Upper lobe of right lung (tissue), 1 donor: ENCODE measurements at regions of chr18 and their contacts with region 1.

Region 1: GRCh38 chr18:32158108-32158624 is 31.7 kb upstream of the MEP1B start:
- DNase-seq: peak; percentile 75
- ATAC-seq: peak; percentile 99
- H3K4me3 ChIP-seq: peak overlapping the region; percentile 39
- H3K27ac ChIP-seq: no peak overlapping the region
- H3K4me1 ChIP-seq: peaks cover 3% of the 10 kb centered on the region
- H3K27me3 ChIP-seq: no peaks in the 10 kb centered on the region
- CTCF ChIP-seq: peak; percentile 83

Region 2: DNA sequence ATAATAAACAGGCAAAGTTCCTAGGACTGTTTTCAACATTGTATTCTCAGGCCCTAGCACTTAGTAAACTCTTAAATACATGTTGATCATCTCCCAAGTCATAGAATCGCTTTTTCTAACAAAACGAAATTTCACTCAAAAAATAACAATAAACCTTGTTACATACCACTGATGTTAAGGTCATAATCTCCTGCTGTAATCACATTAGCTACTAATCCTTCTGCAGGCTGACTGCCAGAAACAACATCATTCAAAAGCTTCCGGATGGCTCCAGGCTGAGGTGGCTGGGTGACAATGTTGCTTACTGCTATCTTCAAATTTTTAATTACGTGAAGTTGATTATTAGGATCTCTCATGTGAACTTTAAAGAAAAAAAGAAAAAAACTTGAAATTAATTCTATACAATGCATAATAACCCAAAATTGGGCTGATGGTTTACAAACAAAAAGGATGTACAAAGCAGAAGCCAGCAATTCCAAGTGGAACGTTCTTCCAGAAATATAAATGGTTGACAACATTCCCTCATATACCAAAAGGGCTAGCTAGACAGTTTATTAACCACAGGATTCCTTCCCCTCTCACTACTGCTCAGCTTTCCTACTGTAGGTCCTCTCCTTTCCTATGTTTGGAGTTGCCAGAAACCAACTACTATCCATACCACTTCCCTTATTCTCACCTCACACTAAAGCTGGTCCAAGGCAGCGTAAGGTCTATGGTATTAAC is 226.8 kb before region 1 on chr18:
- intact Hi-C with region 1: no loop called
- DNase-seq: no peak
- ATAC-seq: no peak
- H3K4me3 ChIP-seq: no peak overlapping the region
- H3K27ac ChIP-seq: no peak overlapping the region
- H3K4me1 ChIP-seq: no peaks in the 10 kb centered on the region
- H3K27me3 ChIP-seq: no peaks in the 10 kb centered on the region
- CTCF ChIP-seq: no peak

Region 3: GRCh38 chr18:32552421-32553030 is 394.4 kb after region 1 on chr18:
- intact Hi-C with region 1: loop called (anchors 5 kb)
- DNase-seq: no peak
- ATAC-seq: peak; percentile 91
- H3K4me3 ChIP-seq: no peak overlapping the region
- H3K27ac ChIP-seq: no peak overlapping the region
- H3K4me1 ChIP-seq: no peaks in the 10 kb centered on the region
- H3K27me3 ChIP-seq: no peaks in the 10 kb centered on the region
- CTCF ChIP-seq: peak; percentile 85